ENCODE measurements at regions of chr14 and their contacts with region 1.

Region 1: GRCh38 chr14:72516936-72517700 is 376.8 kb downstream of the DPF3 start:
- DNase-seq: peak; percentile 64
- H3K4me3 ChIP-seq: no peak overlapping the region
- H3K27ac ChIP-seq: no peak overlapping the region
- H3K4me1 ChIP-seq: no peaks in the 10 kb centered on the region
- H3K27me3 ChIP-seq: no peaks in the 10 kb centered on the region
- CTCF ChIP-seq: peak; percentile 87 to 92

Region 2: GRCh38 chr14:72544619-72545387 is 27.7 kb after region 1 on chr14:
- CTCF ChIA-PET with region 1: interaction called, 3 read pairs
- dilution Hi-C with region 1: no loop called
- in situ Hi-C with region 1: no loop called
- intact Hi-C with region 1: loop called (anchors 2 kb)
- DNase-seq: no peak
- H3K4me3 ChIP-seq: no peak overlapping the region
- H3K27ac ChIP-seq: no peak overlapping the region
- H3K4me1 ChIP-seq: peaks cover 28% of the 10 kb centered on the region
- H3K27me3 ChIP-seq: no peaks in the 10 kb centered on the region
- CTCF ChIP-seq: no peak

Region 3: GRCh38 chr14:72573725-72574417 is 56.8 kb after region 1 on chr14:
- CTCF ChIA-PET with region 1: no interaction called
- dilution Hi-C with region 1: no loop called
- in situ Hi-C with region 1: no loop called
- intact Hi-C with region 1: no loop called
- DNase-seq: no peak
- H3K4me3 ChIP-seq: no peak overlapping the region
- H3K27ac ChIP-seq: no peak overlapping the region
- H3K4me1 ChIP-seq: no peaks in the 10 kb centered on the region
- H3K27me3 ChIP-seq: no peaks in the 10 kb centered on the region
- CTCF ChIP-seq: no peak

Region 4: GRCh38 chr14:72893636-72894321 is 376.7 kb after region 1 on chr14 and contains the start of gene DPF3:
- CTCF ChIA-PET with region 1: no interaction called
- dilution Hi-C with region 1: no loop called
- in situ Hi-C with region 1: no loop called
- intact Hi-C with region 1: loop called (anchors 2 kb)
- DNase-seq: peak; percentile 95
- H3K4me3 ChIP-seq: peak within 1 kb of the TSS; percentile 68 to 99 (median 94)
- H3K27ac ChIP-seq: no peak within 1 kb of the TSS
- H3K4me1 ChIP-seq: peaks cover 19% of the 10 kb centered on the region
- H3K27me3 ChIP-seq: no peaks in the 10 kb centered on the region
- CTCF ChIP-seq: no peak
- total RNA-seq, gene DPF3: 1.8 to 1.9 TPM

Region 5: GRCh38 chr14:72948481-72949138 is 431.5 kb after region 1 on chr14:
- CTCF ChIA-PET with region 1: interaction called, 4 read pairs
- dilution Hi-C with region 1: no loop called
- in situ Hi-C with region 1: loop called in 1 of 2 experiments (anchors 10 kb)
- intact Hi-C with region 1: loop called (anchors 1 kb)
- DNase-seq: peak; percentile 41
- H3K4me3 ChIP-seq: no peak overlapping the region
- H3K27ac ChIP-seq: no peak overlapping the region
- H3K4me1 ChIP-seq: no peaks in the 10 kb centered on the region
- H3K27me3 ChIP-seq: no peaks in the 10 kb centered on the region
- CTCF ChIP-seq: peak; percentile 84 to 92

Region 6: GRCh38 chr14:73283608-73284379 is 766.7 kb after region 1 on chr14:
- CTCF ChIA-PET with region 1: no interaction called
- dilution Hi-C with region 1: no loop called
- in situ Hi-C with region 1: no loop called
- intact Hi-C with region 1: loop called (anchors 5 kb)
- DNase-seq: no peak
- H3K4me3 ChIP-seq: no peak overlapping the region
- H3K27ac ChIP-seq: no peak overlapping the region
- H3K4me1 ChIP-seq: no peaks in the 10 kb centered on the region
- H3K27me3 ChIP-seq: no peaks in the 10 kb centered on the region
- CTCF ChIP-seq: peak in 1 of 2 donors; percentile 32

Region 7: GRCh38 chr14:73633116-73634010 is 1116.2 kb after region 1 on chr14:
- CTCF ChIA-PET with region 1: no interaction called
- dilution Hi-C with region 1: no loop called
- in situ Hi-C with region 1: no loop called
- intact Hi-C with region 1: loop called (anchors 5 kb)
- DNase-seq: peak; percentile 46
- H3K4me3 ChIP-seq: peak overlapping the region; percentile 47 to 57 (median 53)
- H3K27ac ChIP-seq: no peak overlapping the region
- H3K4me1 ChIP-seq: peaks cover 13% of the 10 kb centered on the region
- H3K27me3 ChIP-seq: no peaks in the 10 kb centered on the region
- CTCF ChIP-seq: peak; percentile 86 to 91

Measured in mammary epithelial cell (primary cell).